Left cardiac atrium (tissue), 4 donors: ENCODE measurements at regions of chr3 and their contacts with region 1.

Region 1: DNA sequence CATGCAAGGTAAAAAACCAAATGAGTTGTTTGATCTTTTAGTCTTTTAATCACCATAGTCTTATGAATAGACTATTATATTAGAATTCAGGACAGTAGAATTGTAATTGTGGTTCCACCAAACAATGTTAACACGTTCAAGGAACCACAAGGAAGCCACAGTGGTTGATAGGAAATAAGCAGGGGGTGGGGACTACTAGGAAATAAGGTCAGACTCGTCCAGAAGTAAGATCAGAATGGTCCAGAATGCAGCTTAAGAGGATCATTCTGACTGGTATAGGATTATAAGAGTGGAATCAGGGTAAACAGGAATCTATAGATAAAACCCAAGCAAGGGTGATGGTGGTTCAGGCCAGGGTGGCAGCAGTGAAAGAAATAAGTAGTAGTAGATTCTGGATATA is 7.5 kb downstream of the MYNN start:
- DNase-seq: no peak
- ATAC-seq: no peak

Region 2: DNA sequence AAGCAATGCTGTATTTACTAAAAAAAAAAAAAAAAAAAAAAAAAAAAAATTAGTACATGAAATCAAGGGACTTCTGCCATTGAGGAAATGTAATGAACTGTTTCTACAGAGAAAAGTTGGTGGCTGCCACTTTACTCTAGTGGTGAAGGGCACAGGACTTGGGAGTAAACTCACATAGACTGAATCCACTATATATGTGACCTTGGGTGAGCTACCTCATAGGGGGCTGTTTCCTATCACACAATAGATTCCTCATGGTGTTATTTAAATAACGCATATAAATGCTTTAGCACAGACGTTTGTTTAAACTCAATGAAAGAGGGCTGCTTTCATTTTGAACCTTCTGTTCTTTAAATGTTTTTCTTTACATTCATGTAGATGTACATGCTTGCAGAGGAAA is 41.7 kb before region 1 on chr3:
- intact Hi-C with region 1: no loop called
- DNase-seq: no peak
- ATAC-seq: no peak

Region 3: GRCh38 chr3:170089862-170090600 is 309.3 kb after region 1 on chr3:
- intact Hi-C with region 1: loop called in 1 of 2 experiments (anchors 10 kb)
- DNase-seq: no peak
- ATAC-seq: peak in 1 of 2 donors; percentile 23

Region 4: GRCh38 chr3:170117134-170117533 is 336.4 kb after region 1 on chr3:
- intact Hi-C with region 1: no loop called
- DNase-seq: no peak
- ATAC-seq: no peak